GM10248 (cell line): ENCODE measurements at regions of chr6 and their contacts with region 1.

Region 1: DNA sequence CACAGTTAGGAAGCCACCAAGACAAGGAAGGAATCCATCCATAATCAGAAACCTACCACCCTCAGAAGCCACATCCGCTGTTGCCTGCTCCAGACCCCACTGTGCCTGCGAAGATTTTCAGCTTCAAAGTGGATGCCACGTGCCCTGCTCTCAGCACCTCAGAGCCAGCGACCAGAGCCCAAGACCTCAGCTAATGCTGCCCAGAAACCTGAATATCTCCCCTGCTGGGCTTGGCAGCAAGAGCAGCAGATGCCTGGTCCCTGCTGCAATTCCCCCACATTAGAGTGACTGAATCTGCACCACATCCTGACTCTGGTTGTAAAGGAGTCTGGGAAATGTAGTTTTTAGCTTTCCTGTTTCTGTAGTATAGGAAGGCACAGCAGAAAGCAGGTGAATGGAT is 10.7 kb upstream of the ULBP3 start:
- DNase-seq: no peak
- CTCF ChIP-seq: no peak

Region 2: DNA sequence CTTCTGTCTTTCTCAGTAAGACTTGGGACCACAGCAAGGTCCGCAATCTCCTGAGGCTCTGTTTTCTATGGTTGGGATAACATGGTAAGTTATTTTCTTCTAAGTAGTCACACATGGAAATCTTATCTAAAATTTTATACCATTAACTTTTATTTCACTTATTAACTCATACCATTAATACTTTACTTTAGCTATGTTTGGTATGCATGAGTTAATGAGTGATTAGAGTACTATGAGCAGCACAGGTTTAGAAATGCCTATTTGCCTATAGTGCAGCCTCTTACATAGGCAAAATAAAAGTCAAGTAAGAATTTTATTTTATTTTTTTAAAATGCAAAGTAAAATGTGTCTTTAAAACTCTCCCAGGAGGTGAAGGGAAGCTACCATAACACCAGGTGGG is 486.2 kb before region 1 on chr6:
- CTCF ChIA-PET with region 1: no interaction called
- POLR2A ChIA-PET with region 1: no interaction called
- DNase-seq: no peak
- CTCF ChIP-seq: no peak

Region 3: GRCh38 chr6:150056156-150056555 is 23.4 kb before region 1 on chr6:
- CTCF ChIA-PET with region 1: interaction called, 27 read pairs
- POLR2A ChIA-PET with region 1: no interaction called
- DNase-seq: no peak
- CTCF ChIP-seq: no peak

Region 4: GRCh38 chr6:150068720-150069648 is 10.6 kb before region 1 on chr6 and contains the start of gene ULBP3:
- CTCF ChIA-PET with region 1: interaction called, 21 read pairs
- POLR2A ChIA-PET with region 1: no interaction called
- DNase-seq: peak; percentile 83
- CTCF ChIP-seq: peak; percentile 56

Region 5: DNA sequence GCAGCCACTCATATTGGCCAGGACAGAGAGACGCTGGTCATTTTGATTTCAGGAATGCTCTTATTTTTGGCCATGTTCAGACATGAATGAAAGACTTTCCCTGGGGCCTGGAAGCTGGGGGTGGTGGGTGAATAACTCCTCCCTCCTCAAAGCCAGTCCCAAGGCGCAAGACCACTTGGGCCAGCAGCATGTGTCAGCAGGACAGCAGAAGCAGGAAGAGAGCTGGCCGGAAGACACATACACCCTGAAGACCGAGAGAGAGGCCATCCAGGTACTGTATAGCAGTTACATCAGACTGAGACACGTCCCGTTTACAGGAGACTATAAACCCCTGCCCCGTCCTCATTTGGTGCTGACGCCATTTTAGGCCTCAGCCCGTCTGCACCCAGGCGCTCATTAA is 18.6 kb after region 1 on chr6:
- CTCF ChIA-PET with region 1: interaction called, 13 read pairs
- POLR2A ChIA-PET with region 1: no interaction called
- DNase-seq: no peak
- CTCF ChIP-seq: no peak